Posterior vena cava (tissue), 2 donors: ENCODE measurements at regions of chr3 and their contacts with region 1.

Region 1: DNA sequence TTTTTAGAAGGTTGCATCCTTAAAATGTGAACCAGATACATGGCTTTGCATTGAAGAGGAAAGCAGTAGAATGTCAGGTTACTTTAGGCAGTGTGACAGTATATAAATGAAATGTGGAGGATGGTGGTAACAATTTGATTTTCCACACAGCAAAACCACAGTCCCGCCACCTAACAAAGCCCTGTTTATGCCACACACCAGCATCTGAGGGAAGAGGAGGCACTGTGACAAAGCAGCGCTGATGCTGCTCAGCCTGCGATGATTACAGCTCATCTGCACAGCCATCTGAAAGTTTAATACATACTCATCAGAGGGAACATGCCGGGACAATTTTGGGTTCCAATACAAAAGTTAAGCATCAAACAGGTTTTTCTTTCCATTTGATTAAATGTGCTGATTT is 8.9 kb downstream of the RNF7 start:
- DNase-seq: no peak

Region 2: DNA sequence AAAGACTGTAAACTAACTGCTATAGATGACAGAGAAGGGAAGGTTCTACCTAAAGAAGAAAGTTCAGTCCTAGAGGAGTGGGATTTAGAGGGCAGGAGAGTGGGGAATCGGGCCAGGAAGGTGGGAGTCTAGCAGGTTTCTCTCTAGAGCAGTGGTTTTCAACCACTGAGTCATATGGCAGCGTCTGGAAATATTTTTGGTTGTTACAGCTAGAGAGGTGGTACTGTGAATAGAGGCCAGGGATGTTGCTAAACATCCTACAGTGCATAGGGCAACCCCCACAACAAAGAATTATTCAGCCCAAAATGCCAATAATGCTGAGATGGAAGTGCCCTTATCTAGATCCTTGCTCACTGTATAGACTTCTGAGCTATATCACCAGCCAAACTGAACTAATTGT is 158.2 kb after region 1 on chr3:
- intact Hi-C with region 1: loop called in 1 of 2 experiments (anchors 10 kb)
- DNase-seq: no peak